ENCODE measurements at regions of chr4 and their contacts with region 1.

Region 1: DNA sequence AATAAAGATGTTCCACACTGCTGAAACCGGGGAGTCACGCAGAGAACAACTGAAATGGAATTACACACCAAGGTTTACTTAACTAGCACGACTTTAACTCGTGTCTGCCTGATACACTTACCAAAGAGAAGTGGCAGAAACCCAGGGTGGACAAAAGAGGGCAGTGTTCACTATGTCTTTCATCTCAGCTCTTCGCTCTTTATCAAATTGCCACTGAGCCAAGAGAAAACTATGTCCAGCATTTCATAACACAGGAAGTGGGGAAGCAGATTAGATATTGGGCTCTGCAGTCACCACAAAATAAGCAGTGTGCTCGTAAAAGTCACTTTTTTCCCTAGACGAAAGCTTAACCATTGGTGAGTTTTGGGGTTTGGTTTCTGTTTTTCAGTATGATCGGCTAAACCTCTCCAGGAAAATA is 155.7 kb downstream of the CHIC2 start:
- DNase-seq: peak; percentile 62 to 83 (median 78)
- H3K4me3 ChIP-seq: peak overlapping the region; percentile 14 to 79 (median 67)
- H3K4me3 Mint-ChIP-seq: peak overlapping the region; percentile 39 to 85
- H3K27ac ChIP-seq: peak overlapping the region in 1 of 2 donors; percentile 64
- H3K27ac Mint-ChIP-seq: peak overlapping the region in 5 of 7 donors; percentile 35 to 50 (median 46)
- H3K4me1 ChIP-seq: peaks cover 42 to 49% of the 10 kb centered on the region in 2 donors
- H3K4me1 Mint-ChIP-seq: peaks cover 48% of the 10 kb centered on the region
- H3K27me3 ChIP-seq: peaks cover 16 to 21% of the 10 kb centered on the region in 2 donors
- H3K27me3 Mint-ChIP-seq: peaks cover 4 to 13% (median 13%) of the 10 kb centered on the region in 3 donors
- CTCF ChIP-seq: peak; percentile 86

Region 2: GRCh38 chr4:54217642-54218495 is 309.2 kb after region 1 on chr4:
- intact Hi-C with region 1: loop called in 1 of 2 experiments (anchors 5 kb)
- DNase-seq: peak; percentile 49 to 66 (median 62)
- H3K4me3 ChIP-seq: peak overlapping the region in 2 of 3 experiments; percentile 23 to 63
- H3K4me3 Mint-ChIP-seq: peak overlapping the region; percentile 62 to 81
- H3K27ac ChIP-seq: no peak overlapping the region
- H3K27ac Mint-ChIP-seq: peak overlapping the region in 1 of 7 donors; percentile 61
- H3K4me1 ChIP-seq: peaks cover 4 to 5% of the 10 kb centered on the region in 2 donors
- H3K4me1 Mint-ChIP-seq: peaks cover 4% of the 10 kb centered on the region
- H3K27me3 ChIP-seq: peaks cover 4 to 29% of the 10 kb centered on the region in 2 donors
- H3K27me3 Mint-ChIP-seq: peaks cover 38 to 48% (median 41%) of the 10 kb centered on the region in 3 donors
- CTCF ChIP-seq: peak; percentile 85

Region 3: DNA sequence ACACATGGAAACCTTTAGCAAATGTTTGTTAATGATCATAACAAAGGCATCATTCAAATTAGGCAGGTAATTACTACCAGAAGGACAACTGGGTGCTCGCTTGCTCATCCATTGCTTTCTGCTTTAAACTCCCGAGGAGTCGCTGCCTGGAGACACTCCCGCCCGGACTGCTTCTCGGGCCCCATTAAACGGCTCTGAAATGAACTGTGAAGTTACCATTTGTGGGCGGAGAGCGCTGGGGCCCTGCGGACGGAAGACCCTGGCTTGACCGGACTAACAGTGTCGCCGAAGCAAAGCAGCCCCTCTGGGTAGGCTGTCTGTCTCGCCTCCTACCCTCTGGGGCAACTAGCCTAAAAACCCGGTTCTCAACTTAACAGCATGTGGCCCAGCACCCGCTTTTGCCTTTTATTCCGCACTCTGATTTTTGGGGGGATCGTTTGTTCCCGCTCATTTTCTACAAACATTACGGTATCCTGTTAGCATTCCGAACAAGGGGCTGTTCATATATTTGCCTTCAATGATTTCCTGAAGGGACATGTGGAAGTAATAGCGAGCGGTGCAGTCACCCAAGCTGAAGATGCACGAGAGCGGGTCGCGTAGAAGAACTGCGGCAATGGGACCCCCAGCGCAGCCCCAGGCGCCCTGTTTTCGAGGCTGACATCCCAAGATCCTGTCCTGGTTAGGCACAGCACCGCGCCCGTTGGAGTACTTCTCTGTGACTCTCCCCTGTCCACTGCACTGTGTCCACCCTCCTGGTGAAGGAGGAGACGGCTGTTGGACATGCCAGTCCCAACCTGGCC is 318.8 kb after region 1 on chr4:
- intact Hi-C with region 1: loop called in 1 of 2 experiments (anchors 2 kb)
- DNase-seq: no peak
- H3K4me3 ChIP-seq: peak overlapping the region in 1 of 3 experiments; percentile 70
- H3K4me3 Mint-ChIP-seq: peak overlapping the region; percentile 77 to 93
- H3K27ac ChIP-seq: no peak overlapping the region
- H3K27ac Mint-ChIP-seq: no peak overlapping the region
- H3K4me1 ChIP-seq: peaks cover 51 to 56% of the 10 kb centered on the region in 2 donors
- H3K4me1 Mint-ChIP-seq: peaks cover 59% of the 10 kb centered on the region
- H3K27me3 ChIP-seq: peaks cover 80 to 98% of the 10 kb centered on the region in 2 donors
- H3K27me3 Mint-ChIP-seq: peaks cover 98 to 100% (median 100%) of the 10 kb centered on the region in 3 donors
- CTCF ChIP-seq: no peak